Activated T-helper 2 cell treated with anti-CD3 and anti-CD28 coated beads, Interferon-gamma antibody, Interleukin-2, Interleukin-4, amounts not matched to agents 10 μg/mL and 5 μg/mL and 100 μg/mL, durations not matched to agents 14 hours and 24 hours and 36 hours (primary cell): ENCODE measurements at regions of chr2 and their contacts with region 1.

Region 1: DNA sequence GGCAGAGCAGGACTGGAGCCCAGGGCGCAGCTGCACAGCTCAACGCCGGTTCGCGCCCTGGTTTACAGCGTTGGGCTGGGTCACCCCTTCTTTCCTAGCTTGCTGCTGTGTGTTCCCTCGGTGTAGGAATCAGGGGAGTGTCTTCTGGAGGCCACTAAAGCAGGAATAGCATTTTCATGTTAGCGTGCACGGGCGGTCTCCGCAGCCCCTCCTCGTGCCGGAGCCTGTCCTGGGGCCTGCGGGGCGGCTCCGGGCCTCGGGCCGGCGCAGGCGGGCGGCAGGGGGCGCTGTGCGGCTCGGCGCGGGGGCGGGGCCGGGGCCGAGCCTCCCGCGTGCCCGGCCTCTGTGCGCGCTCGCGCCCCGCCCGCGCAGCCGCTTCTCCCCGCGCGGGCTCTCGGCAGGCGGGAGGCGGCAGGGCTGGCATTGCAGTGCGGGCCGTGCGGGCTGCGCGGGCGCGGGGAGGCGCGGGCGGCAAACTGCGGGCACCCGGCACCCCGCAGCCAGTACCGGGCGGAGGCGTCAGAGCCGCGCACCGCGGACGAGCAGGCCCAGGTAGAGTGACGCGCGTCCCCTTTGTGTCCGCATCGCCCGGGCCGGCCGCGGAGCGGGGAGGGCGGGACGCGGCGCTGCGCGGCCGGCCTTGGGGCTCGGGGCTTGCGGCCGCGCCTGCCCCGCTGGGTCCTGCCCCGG is at the start of gene RNF144A:
- DNase-seq: peak; percentile 67
- H3K4me3 Mint-ChIP-seq: peak within 1 kb of the TSS; percentile 75
- H3K27ac Mint-ChIP-seq: peak within 1 kb of the TSS; percentile 47
- H3K4me1 Mint-ChIP-seq: peaks cover 54% of the 10 kb centered on the region
- H3K27me3 Mint-ChIP-seq: peaks cover 2% of the 10 kb centered on the region
- total RNA-seq, gene RNF144A: 19.9 and 20.0 TPM in 2 replicates

Region 2: DNA sequence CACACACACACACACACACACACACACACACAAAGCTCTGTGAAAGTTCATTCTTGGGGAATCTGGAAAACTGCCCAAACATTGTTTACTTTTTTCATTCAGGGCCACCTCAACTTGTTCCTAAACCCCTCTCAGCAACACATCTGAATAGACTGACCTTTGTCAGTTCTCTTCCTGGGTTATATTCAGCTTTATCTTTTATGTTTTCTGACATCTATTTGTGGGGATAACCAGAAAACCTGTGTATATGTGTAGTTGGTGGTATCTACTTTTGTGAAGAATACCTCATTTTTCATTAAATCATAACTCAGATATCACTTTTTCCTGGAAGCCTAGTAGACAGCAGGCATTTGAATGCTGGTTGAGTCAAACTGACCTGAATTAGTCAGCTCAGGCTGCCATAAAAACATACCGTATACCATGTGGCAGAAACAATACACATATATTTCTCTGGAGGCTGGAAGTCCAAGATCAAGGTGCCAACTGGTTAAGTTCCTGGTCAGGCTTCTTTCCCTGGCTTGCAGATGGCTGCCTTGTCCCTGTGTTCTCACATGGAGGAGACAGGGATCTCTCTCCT is 11.0 kb before region 1 on chr2:
- intact Hi-C with region 1: no loop called
- DNase-seq: no peak
- H3K4me3 Mint-ChIP-seq: no peak overlapping the region
- H3K27ac Mint-ChIP-seq: peak overlapping the region; percentile 76
- H3K4me1 Mint-ChIP-seq: peaks cover 49% of the 10 kb centered on the region
- H3K27me3 Mint-ChIP-seq: no peaks in the 10 kb centered on the region

Region 3: GRCh38 chr2:7014174-7014640 is 97.0 kb after region 1 on chr2:
- intact Hi-C with region 1: loop called (anchors 5 kb)
- DNase-seq: peak; percentile 13
- H3K4me3 Mint-ChIP-seq: no peak overlapping the region
- H3K27ac Mint-ChIP-seq: no peak overlapping the region
- H3K4me1 Mint-ChIP-seq: peaks cover 26% of the 10 kb centered on the region
- H3K27me3 Mint-ChIP-seq: no peaks in the 10 kb centered on the region